Sigmoid colon (tissue), 7 donors: ENCODE measurements at regions of chr19 and their contacts with region 1.

Region 1: DNA sequence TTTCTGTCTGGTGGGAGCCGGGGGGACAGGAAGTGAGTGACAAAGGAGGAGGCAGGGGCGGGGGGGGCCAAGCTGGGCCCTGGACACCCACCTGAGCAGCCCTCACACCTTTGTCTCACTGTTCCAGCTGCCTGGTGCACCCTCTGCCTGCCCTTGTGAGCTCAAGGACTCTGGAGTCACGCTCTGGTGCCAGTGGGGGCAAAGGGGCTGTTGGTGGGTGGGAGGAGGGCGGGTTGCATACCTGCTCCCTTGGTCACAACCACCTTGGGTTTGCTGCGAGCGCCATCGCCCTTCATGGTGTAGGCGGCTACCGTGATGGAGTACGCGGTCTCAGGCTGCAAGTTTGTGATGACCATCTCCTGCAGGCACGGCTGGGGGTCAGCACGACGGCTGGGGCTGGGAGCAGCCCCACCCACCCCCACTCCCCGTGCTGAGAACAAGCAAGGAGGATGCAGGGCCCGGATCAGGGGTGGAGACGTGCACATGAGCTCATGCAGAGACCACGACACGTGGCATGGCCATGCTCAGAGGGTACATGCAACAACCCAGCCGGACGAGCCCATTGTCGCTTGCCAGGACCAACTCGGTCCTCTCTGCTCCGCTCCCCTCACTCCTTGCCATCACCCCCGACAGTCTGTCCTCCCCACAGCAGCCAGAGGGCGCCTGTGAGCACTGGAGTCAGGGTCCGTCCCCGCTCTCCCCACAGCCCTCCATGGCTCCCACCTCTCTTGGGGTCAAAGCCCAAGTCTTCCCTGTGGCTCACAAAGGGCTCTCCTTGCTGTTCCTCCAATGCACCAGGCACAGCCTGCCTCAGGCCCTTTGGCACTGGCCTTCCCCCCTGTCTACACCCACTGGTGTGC is 114.9 kb downstream of the PTPRS start:
- DNase-seq: no peak
- H3K4me3 ChIP-seq: no peak overlapping the region
- H3K27ac ChIP-seq: no peak overlapping the region
- H3K4me1 ChIP-seq: peaks cover 0 to 10% (median 3%) of the 10 kb centered on the region in 4 donors
- H3K27me3 ChIP-seq: no peaks in the 10 kb centered on the region
- CTCF ChIP-seq: peak in 2 of 4 experiments; percentile 11 to 31
- EP300 ChIP-seq: no peak
- POLR2A ChIP-seq: no peak

Region 2: DNA sequence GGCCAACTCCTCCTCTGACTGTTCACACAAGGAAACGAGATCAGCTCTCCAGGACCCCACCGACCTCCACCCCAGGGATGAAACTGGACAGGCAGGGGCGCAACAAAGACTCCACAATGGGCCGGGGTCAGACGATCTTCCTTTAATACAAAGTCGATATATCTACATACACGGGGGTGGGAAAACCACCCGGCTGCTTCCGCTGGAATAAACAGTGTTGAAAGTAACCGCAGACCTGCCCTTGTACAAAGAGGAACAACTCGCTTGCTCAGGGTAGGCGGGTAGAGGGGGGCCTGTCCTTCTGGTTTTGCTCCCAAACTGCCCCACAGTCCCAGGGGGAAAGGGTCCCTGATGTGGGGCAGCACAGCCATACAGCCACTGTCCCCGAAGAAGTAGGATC is 20.3 kb before region 1 on chr19:
- intact Hi-C with region 1: no loop called
- DNase-seq: no peak
- H3K4me3 ChIP-seq: no peak overlapping the region
- H3K27ac ChIP-seq: no peak overlapping the region
- H3K4me1 ChIP-seq: no peaks in the 10 kb centered on the region
- H3K27me3 ChIP-seq: no peaks in the 10 kb centered on the region
- CTCF ChIP-seq: no peak
- EP300 ChIP-seq: no peak
- POLR2A ChIP-seq: no peak

Region 3: GRCh38 chr19:5298471-5298901 is 72.8 kb after region 1 on chr19:
- intact Hi-C with region 1: no loop called
- DNase-seq: no peak
- H3K4me3 ChIP-seq: no peak overlapping the region
- H3K27ac ChIP-seq: no peak overlapping the region
- H3K4me1 ChIP-seq: peaks cover 0 to 9% (median 8%) of the 10 kb centered on the region in 4 donors
- H3K27me3 ChIP-seq: no peaks in the 10 kb centered on the region
- CTCF ChIP-seq: no peak
- EP300 ChIP-seq: no peak
- POLR2A ChIP-seq: no peak

Region 4: DNA sequence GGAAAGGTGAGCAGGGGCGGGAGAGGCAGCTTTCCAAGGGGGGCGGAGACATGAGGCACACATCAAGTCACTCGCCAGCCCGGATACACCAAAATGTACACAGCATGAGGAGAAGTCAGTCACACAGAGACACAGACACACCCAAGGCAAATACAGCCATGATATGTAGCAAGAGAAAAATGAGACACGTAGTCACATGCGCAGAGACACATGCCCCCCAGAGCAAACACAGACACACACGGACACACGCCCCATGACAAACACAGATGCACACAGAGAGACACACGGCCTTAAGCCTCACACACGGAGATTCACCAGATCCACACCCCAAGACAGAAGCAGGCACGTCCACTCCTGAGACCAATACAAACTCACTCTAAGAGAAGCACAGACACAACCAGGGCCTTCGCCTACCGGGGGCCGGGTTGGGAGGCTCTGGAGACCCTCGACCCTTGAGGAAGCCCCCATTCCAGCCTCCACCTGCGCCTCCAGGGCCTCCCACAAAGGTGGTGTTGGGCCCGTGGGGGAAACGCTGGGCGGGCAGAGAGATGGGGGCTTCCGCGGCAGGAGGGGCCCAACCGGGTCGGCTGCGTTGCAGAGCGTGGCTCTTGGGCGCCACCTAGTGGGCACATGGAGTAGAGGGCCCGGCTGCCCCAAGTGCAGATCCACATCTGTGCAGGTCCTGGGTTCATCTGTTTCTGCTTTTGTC is 352.2 kb after region 1 on chr19:
- intact Hi-C with region 1: loop called (anchors 10 kb)
- DNase-seq: peak; percentile 74
- H3K4me3 ChIP-seq: no peak overlapping the region
- H3K27ac ChIP-seq: no peak overlapping the region
- H3K4me1 ChIP-seq: peaks cover 0 to 16% (median 6%) of the 10 kb centered on the region in 4 donors
- H3K27me3 ChIP-seq: no peaks in the 10 kb centered on the region
- CTCF ChIP-seq: peak; percentile 80 to 100 (median 94)
- EP300 ChIP-seq: no peak
- POLR2A ChIP-seq: no peak